Posterior cingulate gyrus (tissue), 11 donors: ENCODE measurements at regions of chr2 and their contacts with region 1.

Region 1: GRCh38 chr2:109545828-109546713 is 67.7 kb downstream of the SEPTIN10 start:
- DNase-seq: peak; percentile 37 to 96 (median 74)

Region 2: DNA sequence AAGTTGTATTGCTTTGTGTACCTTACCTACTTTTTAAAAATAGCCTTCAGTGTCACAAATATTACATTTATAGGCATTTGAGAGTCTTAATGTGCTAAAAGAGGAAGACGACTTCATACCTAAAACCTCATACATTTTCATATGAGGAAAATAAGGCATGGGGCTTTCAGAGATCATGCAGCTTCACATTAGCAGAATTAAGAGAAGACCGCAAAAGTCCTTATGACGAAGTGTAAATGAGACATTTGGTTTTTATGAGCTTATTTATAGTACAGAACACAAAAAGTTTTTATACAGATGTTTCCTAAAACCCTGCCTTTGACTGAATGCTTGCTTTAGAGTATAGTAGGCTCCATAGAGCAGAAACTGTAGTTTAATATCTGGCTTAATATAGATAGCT is 769.6 kb before region 1 on chr2:
- intact Hi-C with region 1: no loop called
- DNase-seq: no peak

Region 3: GRCh38 chr2:109020217-109020637 is 525.8 kb before region 1 on chr2:
- intact Hi-C with region 1: no loop called
- DNase-seq: no peak

Region 4: GRCh38 chr2:109185821-109186570 is 360.1 kb before region 1 on chr2:
- intact Hi-C with region 1: no loop called
- DNase-seq: peak in 2 of 10 donors; percentile 34 to 47

Region 5: GRCh38 chr2:109582928-109583895 is 37.1 kb after region 1 on chr2:
- intact Hi-C with region 1: no loop called
- DNase-seq: no peak

Region 6: GRCh38 chr2:109722026-109722425 is 176.0 kb after region 1 on chr2:
- intact Hi-C with region 1: loop called (anchors 10 kb)
- DNase-seq: no peak